ENCODE measurements at regions of chr2 and their contacts with region 1.

Region 1: DNA sequence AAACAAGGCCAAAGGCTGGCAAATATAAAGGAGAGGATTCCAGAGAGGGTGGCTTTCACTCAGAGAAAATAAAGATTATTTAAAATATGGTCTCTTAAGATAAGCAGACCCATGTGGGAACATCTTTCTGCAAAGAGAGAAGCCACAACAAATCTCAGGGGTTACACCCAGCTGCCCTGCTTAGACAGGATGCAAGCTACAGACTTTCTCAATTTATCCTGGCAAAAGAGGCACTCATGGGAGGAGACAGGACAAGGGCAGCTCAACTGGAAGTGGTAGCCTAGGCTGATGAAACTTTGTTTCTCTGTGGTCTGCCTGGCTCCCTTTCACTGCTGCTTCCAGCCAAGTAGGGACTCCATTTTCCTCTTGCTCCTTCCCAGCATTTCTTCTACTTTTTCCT is 25.9 kb upstream of the SULT1C4 start:
- DNase-seq: no peak
- ATAC-seq: no peak
- H3K4me3 ChIP-seq: no peak overlapping the region
- H3K27ac ChIP-seq: no peak overlapping the region
- H3K4me1 ChIP-seq: no peaks in the 10 kb centered on the region
- H3K27me3 ChIP-seq: no peaks in the 10 kb centered on the region
- CTCF ChIP-seq: no peak

Region 2: DNA sequence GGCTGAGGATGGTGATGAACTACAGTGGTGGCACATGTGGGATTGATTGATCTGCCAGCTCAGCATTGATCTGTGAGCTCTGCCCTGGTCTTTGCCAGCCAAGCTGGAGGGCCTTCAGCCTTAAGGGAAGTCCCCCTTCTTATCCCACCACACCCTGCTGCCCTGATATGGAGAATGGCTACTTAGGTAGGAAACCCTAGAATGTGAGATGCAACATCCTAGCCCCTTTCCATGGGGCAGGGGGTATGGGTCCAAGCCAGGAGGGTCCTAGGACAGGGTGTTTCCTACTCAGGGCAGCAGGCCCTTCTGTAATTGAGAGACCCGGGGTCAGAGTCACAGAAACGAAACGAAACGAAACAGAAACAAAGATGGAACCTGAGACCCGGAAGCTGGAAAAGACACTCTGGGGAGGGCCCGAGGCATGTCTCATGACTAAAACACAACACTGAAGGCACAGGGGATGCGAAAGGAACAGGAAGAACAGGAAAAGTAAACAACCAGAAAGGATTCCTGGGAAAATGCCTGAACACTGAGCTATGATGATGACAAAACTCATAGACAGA is 80.1 kb before region 1 on chr2:
- CTCF ChIA-PET with region 1: no interaction called
- POLR2A ChIA-PET with region 1: no interaction called
- intact Hi-C with region 1: no loop called
- DNase-seq: peak; percentile 86
- ATAC-seq: peak; percentile 78
- H3K4me3 ChIP-seq: peak overlapping the region; percentile 60
- H3K27ac ChIP-seq: peak overlapping the region; percentile 73
- H3K4me1 ChIP-seq: peaks cover 37% of the 10 kb centered on the region
- H3K27me3 ChIP-seq: no peaks in the 10 kb centered on the region
- CTCF ChIP-seq: no peak

Region 3: DNA sequence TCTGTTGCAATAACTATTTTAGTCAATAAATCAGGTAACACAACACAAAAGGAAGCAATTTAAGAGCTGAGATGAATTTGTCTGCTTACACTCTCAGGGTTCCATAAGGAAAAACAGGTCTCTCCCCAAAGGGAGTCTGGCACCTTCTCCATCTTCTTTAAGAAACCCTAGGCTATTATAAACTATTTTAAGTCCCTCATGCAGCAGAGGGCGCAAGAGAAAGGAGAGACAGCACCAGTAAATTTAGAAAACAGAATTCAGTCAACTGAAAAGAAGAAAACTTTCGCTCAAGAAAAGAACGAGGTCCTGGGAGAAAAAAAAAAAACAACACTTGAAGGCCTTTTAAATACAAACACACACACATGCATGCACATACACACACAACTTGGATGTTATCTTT is 45.0 kb after region 1 on chr2:
- CTCF ChIA-PET with region 1: no interaction called
- POLR2A ChIA-PET with region 1: no interaction called
- intact Hi-C with region 1: loop called (anchors 5 kb)
- DNase-seq: peak; percentile 67
- ATAC-seq: peak; percentile 22; the same call in 1 of the 2 replicates
- H3K4me3 ChIP-seq: no peak overlapping the region
- H3K27ac ChIP-seq: no peak overlapping the region
- H3K4me1 ChIP-seq: no peaks in the 10 kb centered on the region
- H3K27me3 ChIP-seq: no peaks in the 10 kb centered on the region
- CTCF ChIP-seq: peak; percentile 74

Region 4: GRCh38 chr2:108412995-108413710 is 61.3 kb after region 1 on chr2:
- CTCF ChIA-PET with region 1: no interaction called
- POLR2A ChIA-PET with region 1: no interaction called
- intact Hi-C with region 1: no loop called
- DNase-seq: peak; percentile 98
- ATAC-seq: peak; percentile 80
- H3K4me3 ChIP-seq: peak overlapping the region; percentile 18; the same call in 1 of the 2 replicates
- H3K27ac ChIP-seq: peak overlapping the region; percentile 97
- H3K4me1 ChIP-seq: peaks cover 34% of the 10 kb centered on the region
- H3K27me3 ChIP-seq: no peaks in the 10 kb centered on the region
- CTCF ChIP-seq: no peak

Region 5: DNA sequence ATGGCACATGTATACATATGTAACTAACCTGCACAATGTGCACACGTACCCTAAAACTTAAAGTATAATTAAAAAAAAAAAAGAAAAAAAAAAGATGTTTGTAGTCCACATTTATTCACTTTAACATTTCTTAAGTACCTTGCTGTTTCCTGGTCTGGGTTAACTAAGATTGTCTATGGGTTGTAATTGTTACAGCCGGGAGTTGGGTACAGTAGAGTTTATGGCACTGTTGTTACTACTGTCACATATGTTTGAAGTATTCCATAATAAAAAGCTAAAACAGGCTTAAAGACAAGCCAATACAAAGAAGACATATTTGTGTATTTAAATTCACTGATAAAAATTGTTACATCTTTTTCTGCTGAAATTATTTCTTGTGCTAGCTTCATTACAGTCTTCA is 133.4 kb after region 1 on chr2:
- CTCF ChIA-PET with region 1: no interaction called
- POLR2A ChIA-PET with region 1: no interaction called
- intact Hi-C with region 1: loop called (anchors 5 kb)
- DNase-seq: no peak
- ATAC-seq: no peak
- H3K4me3 ChIP-seq: no peak overlapping the region
- H3K27ac ChIP-seq: no peak overlapping the region
- H3K4me1 ChIP-seq: no peaks in the 10 kb centered on the region
- H3K27me3 ChIP-seq: no peaks in the 10 kb centered on the region
- CTCF ChIP-seq: no peak